ENCODE measurements at regions of chr2 and their contacts with region 1.

Region 1: GRCh38 chr2:118855451-118856279 is 8.2 kb upstream of the EN1 start:
- DNase-seq: peak; percentile 85

Region 2: GRCh38 chr2:118046634-118047210 is 808.9 kb before region 1 on chr2:
- intact Hi-C with region 1: loop called (anchors 5 kb)
- DNase-seq: no peak

Region 3: DNA sequence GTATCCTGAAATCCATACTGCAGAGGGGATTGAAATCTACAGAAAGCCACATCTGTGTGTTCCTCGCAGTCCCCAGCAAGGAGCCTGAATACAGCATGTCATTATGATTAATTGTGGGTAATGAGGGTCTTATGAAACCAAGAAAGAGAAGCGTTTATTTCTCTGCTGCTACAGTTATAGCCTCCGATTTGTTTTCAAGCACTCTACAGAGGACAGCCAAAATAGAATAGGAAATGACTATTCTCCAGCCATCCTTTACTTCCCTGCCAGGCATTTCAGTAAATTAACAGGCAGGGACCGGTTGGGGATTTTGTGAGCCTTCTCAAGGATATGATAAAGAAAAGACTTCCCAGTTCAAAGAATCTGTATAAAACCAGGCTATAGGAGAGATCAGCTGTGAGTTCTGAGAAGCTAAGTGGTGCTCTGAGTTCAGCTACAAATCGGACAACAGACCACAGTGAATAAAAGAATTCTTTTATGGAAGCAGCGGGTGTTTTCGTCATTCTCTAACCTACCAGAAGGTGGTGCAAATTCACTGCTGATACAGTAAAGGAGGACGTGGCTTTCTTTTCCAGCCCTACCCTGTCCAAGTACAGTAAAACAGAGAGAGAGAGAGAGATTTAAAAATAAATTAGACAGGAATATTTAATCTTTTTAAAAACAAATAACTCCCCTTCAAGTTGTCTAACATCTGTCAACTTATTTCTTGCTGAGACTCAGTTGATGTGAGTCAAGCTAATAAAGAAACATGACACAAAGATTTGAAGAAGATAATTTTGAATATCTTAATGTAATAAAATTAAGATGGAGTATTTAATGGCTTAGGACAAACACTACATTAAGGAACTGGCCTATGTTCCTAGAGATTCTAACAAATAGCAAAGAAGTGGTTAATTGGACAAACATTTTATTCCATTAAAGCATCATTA is 633.7 kb before region 1 on chr2:
- intact Hi-C with region 1: loop called (anchors 2 kb)
- DNase-seq: no peak

Region 4: GRCh38 chr2:118371515-118371914 is 484.1 kb before region 1 on chr2:
- intact Hi-C with region 1: loop called (anchors 5 kb)
- DNase-seq: no peak

Region 5: DNA sequence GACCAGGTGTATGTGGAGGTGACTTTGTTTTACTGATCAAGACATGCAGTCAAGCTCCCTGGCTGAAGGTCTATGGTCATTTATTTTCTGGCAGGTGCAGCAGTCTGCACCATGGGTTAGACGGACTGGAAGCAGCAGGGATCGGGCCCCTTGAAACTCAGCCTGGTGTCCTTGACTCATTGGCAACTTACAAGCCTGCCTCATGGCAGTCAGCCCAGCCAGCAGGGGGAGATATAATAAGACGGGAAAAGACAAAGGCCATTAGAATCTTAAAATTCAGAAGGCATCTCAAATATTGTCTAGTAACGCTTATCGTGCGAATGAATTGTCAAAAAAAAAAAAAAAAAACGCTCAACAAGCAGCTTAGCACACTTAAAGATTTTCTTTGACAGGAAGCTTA is 316.4 kb before region 1 on chr2:
- intact Hi-C with region 1: loop called (anchors 5 kb)
- DNase-seq: no peak